ENCODE measurements at regions of chr14 and their contacts with region 1.

Region 1: DNA sequence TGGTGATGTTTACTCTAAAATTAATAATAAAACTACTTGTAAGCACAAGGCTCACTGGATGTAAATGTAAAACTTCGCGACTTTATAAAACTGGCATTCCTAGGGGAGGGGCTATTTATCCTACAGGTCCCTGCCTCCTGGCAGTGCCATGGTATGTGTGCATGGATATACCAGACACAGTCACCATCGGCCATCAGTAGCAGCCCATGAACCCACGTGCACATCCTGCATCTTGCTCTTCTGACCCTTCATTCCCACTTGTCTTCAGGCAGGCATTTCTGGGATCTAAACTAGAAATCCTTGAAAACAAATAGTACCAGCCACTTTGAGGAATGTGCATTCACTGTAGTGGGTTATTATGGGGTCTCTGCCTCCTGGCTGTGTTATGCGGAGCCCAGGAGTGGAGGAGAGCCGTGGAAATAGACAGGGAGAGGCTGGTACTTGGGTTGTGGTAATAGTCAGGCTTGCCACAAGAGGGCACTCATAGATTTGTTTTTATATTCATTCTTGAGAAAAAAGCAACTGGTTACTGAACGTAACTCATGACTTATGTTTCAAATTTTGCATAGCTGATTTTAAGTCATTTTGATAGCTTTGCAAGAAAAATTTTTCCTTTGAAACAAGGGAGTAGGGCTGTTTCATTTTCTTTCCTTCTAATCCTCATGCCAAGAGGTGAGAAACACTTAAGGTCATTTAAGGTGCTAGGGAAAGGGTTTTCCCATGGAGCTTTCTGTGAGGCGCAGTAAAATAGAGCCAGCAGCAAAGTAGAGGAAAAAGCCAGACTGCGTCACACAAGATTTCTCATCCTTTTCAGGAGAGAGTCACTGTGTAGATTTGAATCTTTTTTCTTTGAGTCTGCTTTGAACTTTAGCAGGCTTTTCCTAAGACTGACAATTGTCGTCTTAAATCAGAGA is 17.4 kb upstream of the GALNT16 start:
- DNase-seq: peak; percentile 58 to 77 (median 72)
- H3K4me3 ChIP-seq: no peak overlapping the region
- H3K27ac ChIP-seq: no peak overlapping the region
- H3K4me1 ChIP-seq: no peaks in the 10 kb centered on the region
- H3K27me3 ChIP-seq: no peaks in the 10 kb centered on the region

Region 2: GRCh38 chr14:69068744-69069421 is 173.7 kb before region 1 on chr14:
- CTCF ChIA-PET with region 1: no interaction called
- POLR2A ChIA-PET with region 1: no interaction called
- DNase-seq: peak in 2 of 3 donors; percentile 43 to 63
- H3K4me3 ChIP-seq: no peak overlapping the region
- H3K27ac ChIP-seq: no peak overlapping the region
- H3K4me1 ChIP-seq: peaks cover 0 to 10% (median 8%) of the 10 kb centered on the region in 4 experiments
- H3K27me3 ChIP-seq: no peaks in the 10 kb centered on the region

Region 3: DNA sequence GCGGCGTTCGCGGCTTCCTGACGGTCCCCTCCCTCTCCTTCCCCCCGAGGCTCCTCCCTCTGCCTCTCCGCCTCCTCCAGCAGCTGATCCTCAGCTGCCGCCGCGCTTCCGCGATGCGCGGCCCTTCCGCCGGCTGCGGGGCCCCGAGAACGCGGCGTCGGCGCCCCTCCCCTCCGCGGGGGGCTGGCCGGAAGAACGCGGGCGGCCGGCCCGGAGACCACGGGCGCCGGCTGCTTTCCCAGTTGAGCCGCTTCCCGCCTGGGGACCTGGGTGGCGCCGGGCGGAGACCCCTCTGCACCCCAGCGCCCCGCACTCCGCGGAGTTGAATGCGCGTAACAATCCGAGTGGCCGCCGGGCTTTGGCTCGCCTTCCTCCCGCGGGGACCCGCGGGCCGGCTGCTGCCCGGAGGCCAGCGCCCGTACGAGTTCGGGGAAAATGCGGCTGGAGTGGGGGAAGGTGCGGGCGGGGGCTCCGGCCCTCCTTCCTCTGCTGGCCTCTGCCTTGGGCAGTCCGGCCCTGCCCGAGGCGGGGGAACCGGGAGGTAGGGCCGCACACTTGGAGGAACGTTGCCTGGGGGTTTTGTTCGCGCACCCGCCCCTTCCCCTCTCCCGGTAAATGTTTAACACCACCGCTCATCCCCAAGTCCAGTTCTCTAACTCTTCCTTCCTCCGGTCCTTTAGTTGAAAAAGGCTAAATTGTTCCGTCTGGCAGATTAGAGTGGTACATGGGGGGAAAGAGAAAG is 89.3 kb before region 1 on chr14:
- CTCF ChIA-PET with region 1: no interaction called
- POLR2A ChIA-PET with region 1: no interaction called
- DNase-seq: peak; percentile 92 to 97 (median 96)
- H3K4me3 ChIP-seq: peak overlapping the region; percentile 85 to 99 (median 91)
- H3K27ac ChIP-seq: no peak overlapping the region
- H3K4me1 ChIP-seq: peaks cover 8 to 29% (median 26%) of the 10 kb centered on the region in 4 experiments
- H3K27me3 ChIP-seq: peaks cover 0 to 3% (median 0%) of the 10 kb centered on the region in 5 experiments

Region 4: GRCh38 chr14:69226178-69226577 is 16.4 kb before region 1 on chr14:
- CTCF ChIA-PET with region 1: interaction called, 29 read pairs
- POLR2A ChIA-PET with region 1: no interaction called
- DNase-seq: no peak
- H3K4me3 ChIP-seq: no peak overlapping the region
- H3K27ac ChIP-seq: no peak overlapping the region
- H3K4me1 ChIP-seq: no peaks in the 10 kb centered on the region
- H3K27me3 ChIP-seq: no peaks in the 10 kb centered on the region

Region 5: GRCh38 chr14:69325646-69326265 is 83.2 kb after region 1 on chr14:
- CTCF ChIA-PET with region 1: no interaction called
- POLR2A ChIA-PET with region 1: no interaction called
- DNase-seq: no peak
- H3K4me3 ChIP-seq: no peak overlapping the region
- H3K27ac ChIP-seq: no peak overlapping the region
- H3K4me1 ChIP-seq: no peaks in the 10 kb centered on the region
- H3K27me3 ChIP-seq: no peaks in the 10 kb centered on the region

Region 6: DNA sequence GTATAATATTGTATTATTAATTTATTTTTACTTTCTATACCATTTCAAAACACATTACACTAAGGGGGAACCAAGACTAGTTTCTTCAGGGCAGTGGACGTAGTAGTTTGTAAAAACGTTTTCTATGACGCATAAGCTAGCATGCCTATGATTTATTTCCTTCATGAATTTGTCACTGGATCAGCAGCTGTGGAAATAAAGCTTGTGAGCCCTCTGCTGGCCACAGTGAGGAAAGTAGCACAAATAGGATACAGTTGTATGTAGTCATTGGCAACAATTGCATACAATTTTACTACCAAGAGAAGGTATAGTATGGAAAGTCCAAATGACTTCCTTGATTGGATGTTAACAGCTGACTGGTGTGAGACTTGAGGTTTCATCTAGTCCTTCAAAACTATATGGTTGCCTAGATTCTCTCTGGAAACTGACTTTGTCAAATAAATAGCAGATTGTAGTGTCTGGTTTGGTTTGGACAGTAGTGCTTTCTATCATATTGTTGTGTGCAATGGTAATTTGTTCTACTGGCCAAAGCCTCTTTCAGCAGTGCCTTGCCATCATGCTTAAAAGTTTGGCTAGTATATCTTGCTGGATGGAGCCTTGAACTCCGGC is 217.6 kb after region 1 on chr14:
- CTCF ChIA-PET with region 1: interaction called, 25 read pairs
- POLR2A ChIA-PET with region 1: no interaction called
- DNase-seq: peak; percentile 90 to 95 (median 94)
- H3K4me3 ChIP-seq: no peak overlapping the region
- H3K27ac ChIP-seq: no peak overlapping the region
- H3K4me1 ChIP-seq: no peaks in the 10 kb centered on the region
- H3K27me3 ChIP-seq: no peaks in the 10 kb centered on the region